Lower leg skin (tissue), 4 donors: ENCODE measurements at regions of chr15 and their contacts with region 1.

Region 1: DNA sequence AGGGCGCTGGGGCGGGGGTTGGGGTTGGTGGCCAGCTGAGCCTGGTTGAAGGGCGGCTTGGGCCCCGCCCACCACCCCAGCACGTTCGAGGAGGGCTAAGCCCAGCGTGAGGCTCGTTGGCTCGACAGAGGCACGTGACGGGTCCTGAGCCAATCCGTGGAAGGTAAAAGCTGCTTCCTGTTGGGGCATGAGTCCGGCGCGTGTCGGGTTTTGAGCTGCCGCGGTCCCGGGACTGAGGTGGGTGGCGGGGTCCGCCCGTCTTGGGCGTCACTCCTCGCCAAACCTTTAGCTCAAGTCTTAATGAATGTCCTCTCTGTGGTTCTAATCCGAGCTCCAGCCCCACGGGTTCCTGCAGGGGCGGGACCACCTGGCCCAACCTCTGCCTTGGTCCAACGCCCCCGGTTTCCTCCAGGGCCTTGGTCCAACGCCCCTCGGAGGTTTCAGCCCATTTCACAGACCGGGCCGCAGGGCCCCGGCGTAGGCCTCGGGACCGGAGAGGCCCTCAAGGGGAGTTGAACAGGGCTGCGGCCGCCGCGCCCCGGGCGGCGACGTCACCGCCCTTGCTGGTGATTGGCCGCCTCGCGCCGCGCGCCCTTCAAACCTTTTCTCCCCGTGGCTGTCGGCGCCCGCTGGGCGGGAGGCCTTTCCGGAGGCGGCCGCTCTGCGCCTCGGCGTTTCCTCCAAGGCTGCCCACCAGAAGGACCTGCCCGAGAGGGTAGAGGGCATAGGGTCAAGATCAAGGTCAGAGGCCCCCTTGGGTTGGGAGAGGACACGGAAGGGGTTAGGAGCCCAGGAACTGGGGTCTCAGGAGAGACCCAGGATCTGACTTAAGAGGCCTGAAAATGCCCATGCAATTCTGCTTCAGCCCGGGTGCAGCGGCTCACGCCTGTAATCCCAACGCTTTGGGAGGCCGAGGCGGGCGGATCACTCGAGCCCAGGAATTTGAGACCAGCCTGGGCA is at the start of gene RCCD1:
- DNase-seq: peak; percentile 96 to 99
- H3K4me3 ChIP-seq: peak within 1 kb of the TSS; percentile 78
- CTCF ChIP-seq: no peak
- POLR2A ChIP-seq: peak in 1 of 2 donors; percentile 28
- total RNA-seq, gene RCCD1: 11.0 to 24.5 (median 14.1) TPM

Region 2: DNA sequence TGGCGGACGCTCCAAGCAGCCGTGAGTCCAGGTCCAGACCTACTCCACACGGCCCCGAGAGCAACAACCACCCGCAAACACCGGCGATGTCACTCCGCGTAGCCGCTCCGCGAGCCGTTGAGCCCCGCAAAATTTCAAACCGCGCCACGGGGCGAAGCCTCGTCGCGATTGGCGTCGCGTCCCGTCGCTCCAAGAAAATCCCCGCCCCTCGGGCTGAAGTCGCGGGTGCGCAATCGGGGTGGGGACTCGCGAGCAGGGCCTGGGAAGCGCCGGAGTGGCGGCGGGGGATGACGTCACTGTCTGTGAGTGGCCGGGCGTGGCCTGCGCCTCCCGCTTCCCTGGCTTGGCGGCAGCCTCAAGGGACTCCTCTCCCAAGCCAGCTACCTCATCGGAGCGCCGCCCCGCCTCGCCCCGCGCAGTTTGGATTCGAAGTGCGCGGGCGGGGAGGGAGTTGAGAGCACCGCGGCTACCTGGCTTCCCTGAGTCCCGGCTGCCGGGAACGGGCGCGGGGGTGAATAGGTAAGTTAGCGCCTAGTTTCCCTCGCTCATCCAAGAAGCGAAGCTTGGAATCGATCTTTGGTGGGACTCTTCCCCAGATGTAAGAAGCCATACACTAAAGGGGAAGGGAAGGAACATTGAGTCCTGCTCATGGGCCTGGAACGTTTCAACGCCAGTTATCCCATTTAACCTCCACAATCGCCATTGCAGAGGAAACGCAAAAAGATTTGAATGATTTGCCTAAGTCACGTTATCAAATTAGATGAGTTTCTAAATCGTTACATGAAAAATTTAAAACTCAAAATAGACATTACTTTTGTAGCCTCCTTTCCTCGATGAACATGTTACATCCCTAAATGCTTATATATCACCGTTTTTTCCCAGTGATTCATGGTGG is 39.7 kb after region 1 on chr15 and contains the start of gene PRC1:
- intact Hi-C with region 1: loop called (anchors 5 kb)
- DNase-seq: peak; percentile 96 to 100
- H3K4me3 ChIP-seq: peak within 1 kb of the TSS; percentile 94
- CTCF ChIP-seq: peak in 1 of 3 donors; percentile 43
- POLR2A ChIP-seq: no peak
- total RNA-seq, gene PRC1: 16.3 to 24.4 (median 19.5) TPM

Region 3: GRCh38 chr15:91032919-91033803 is 78.2 kb after region 1 on chr15:
- intact Hi-C with region 1: loop called (anchors 5 kb)
- DNase-seq: peak in 1 of 2 donors; percentile 43
- H3K4me3 ChIP-seq: no peak overlapping the region
- CTCF ChIP-seq: no peak
- POLR2A ChIP-seq: no peak

Region 4: GRCh38 chr15:91271565-91272153 is 316.7 kb after region 1 on chr15:
- intact Hi-C with region 1: loop called (anchors 10 kb)
- DNase-seq: peak in 1 of 2 donors; percentile 51
- H3K4me3 ChIP-seq: no peak overlapping the region
- CTCF ChIP-seq: peak in 1 of 3 donors; percentile 41
- POLR2A ChIP-seq: no peak

Region 5: DNA sequence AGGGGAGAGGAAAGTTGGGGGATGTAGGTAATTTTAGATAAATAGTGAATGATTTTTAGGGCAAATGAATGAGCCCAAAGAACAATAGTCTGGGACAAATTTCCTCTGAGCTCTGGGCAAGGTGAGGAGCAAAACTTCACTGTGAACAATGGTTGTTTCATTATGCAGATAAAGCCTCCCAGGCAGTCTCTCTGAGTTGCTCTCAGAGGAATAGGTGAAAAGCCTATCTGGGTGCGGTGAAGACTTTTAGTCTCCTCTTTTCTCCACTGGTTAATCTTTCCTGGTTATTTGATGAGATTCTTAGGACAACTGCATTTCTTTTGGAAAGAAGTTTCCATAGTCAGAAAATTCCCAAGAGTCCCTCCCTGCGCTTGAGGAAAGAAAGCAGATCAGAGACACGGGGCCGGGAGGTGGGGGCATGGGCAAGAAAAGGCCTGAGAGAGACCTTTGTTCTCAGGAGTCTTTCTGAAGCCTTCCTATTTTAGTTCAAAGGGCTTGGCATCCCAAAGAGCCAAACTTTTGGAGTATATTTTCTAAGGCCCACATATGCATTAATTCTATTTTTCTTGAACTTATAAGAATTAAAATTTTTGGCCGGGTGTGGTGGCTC is 544.9 kb after region 1 on chr15:
- intact Hi-C with region 1: no loop called
- DNase-seq: no peak
- H3K4me3 ChIP-seq: no peak overlapping the region
- CTCF ChIP-seq: no peak
- POLR2A ChIP-seq: no peak